ENCODE measurements at regions of chr11 and their contacts with region 1.

Region 1: GRCh38 chr11:67382276-67383136 is 9.1 kb upstream of the CLCF1 start:
- DNase-seq: peak; percentile 95
- H3K4me3 Mint-ChIP-seq: no peak overlapping the region
- H3K27ac Mint-ChIP-seq: no peak overlapping the region
- H3K4me1 Mint-ChIP-seq: peaks cover 2% of the 10 kb centered on the region
- H3K27me3 Mint-ChIP-seq: peaks cover 23% of the 10 kb centered on the region

Region 2: DNA sequence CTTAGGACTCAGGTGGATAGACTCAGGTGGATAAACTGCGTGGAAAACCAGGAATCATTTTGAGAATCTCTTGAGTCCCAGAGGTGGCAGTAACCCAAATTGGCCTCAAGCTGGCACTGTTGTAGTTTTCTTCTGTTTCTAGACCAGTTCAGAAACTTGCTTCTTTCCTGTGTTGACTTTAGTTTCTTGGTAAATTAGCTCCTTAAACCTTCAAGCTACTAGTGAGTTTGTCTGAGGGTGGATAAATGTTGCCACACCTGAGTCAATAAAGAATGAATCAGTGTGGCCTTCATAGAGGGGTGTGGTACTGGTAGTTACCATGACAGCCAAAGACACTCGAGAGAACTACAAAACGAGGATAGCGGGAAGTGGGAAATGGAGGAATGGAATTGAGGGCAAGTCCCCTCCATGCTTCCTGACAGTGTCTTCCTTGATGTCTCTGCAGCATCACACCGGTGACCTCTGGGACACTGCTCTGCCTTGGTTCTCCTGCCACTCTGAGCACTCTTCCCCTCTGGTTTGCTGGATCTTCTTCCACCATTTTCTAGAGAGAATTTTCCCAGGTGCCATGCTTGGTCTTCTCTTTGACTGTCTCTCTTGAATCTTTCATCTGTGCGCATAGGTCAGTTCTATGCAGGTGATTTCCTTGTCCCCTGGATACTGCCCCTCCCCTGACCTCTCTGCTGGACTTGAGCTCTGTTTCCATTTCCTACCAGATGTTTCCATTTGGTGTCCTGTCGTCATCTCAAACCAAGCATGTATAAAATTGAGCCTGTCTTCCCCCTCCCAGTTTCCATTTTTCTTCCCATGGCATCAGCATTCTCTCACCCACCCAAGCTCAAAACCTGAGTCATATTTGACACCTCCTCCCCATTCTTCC is 36.3 kb before region 1 on chr11:
- intact Hi-C with region 1: loop called (anchors 1 kb)
- DNase-seq: peak; percentile 73
- H3K4me3 Mint-ChIP-seq: peak overlapping the region; percentile 49
- H3K27ac Mint-ChIP-seq: peak overlapping the region; percentile 88
- H3K4me1 Mint-ChIP-seq: peaks cover 28% of the 10 kb centered on the region
- H3K27me3 Mint-ChIP-seq: no peaks in the 10 kb centered on the region

Region 3: DNA sequence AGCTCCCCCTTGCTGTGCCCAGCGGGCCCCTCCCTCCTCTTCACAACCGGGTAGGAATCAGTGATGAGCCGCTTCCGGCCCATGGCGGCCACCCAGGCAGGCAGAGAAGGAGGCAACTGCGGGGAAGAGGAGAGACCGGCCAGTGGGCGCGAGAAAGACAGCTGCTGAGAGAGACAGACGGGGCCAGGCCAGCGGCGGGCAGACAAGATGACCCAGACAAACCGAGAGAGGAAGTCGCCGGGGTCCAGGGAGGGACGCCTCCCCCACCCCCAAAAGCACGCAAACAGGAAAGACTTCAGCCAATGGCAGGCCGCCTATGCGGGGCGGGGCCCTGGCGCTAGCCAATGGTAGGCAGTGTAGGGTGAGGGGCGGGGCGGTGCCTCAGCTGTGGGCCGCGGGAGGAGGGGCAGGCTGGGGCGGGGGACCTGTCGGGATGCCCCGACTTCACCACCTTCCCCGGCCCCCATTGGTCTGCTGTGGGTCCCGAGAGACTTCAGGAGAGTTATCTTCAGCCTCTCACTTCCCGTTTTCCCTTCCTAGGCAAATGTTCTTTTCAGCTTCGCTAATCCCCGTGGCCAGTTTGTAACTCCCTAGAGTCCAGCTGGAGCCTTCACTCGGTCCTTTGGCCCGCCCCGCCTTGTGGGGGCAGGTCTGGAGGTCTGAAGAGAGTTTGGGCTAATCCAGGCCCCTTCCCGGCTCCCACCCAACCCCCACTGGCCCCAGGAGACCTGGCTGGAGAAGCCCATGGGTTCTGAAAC is 29.0 kb before region 1 on chr11 and contains the start of gene POLD4:
- intact Hi-C with region 1: loop called (anchors 1 kb)
- DNase-seq: peak; percentile 99
- H3K4me3 Mint-ChIP-seq: peak within 1 kb of the TSS; percentile 97
- H3K27ac Mint-ChIP-seq: peak within 1 kb of the TSS; percentile 98
- H3K4me1 Mint-ChIP-seq: peaks cover 41% of the 10 kb centered on the region
- H3K27me3 Mint-ChIP-seq: peaks cover 5% of the 10 kb centered on the region
- total RNA-seq, gene POLD4: 36.0 and 36.4 TPM in 2 replicates

Measured in activated CD4-positive, alpha-beta T cell treated with anti-CD3 and anti-CD28 coated beads, Interleukin-2, amount 10 ng/mL, durations not matched to agents 24 days and 14 days (primary cell).